ENCODE measurements at regions of chr18 and their contacts with region 1.

Region 1: DNA sequence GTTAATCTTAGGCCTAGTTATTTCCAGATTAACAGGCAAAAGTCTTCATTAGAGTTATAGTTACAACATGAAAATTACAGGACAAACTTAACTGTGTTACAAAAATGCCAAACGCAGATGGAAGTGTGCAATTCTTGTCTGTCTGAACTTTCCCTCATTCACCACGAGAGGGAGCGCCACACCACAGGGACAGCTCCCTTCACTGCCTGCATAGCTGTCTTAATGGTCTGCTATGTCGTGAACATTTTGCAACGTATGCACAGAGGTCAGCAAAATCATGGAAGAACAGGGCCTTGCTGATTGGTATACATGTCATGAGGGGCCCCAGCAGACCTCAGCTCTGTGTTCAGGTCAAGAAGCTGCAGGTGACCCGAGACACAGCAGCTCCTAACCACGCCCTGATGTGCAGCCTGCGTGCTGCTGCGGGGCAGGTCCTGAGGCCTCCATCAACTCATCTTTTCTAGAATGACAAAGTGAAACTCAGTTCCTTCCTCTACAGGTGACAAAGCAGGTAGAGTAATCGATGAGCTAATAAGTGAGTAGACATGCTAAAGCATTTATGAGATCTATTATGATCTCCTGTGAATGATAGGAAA is 78.8 kb upstream of the ATP8B1 start:
- DNase-seq: peak; percentile 94
- H3K4me3 Mint-ChIP-seq: no peak overlapping the region
- H3K27ac Mint-ChIP-seq: no peak overlapping the region
- H3K4me1 Mint-ChIP-seq: peaks cover 5% of the 10 kb centered on the region
- H3K27me3 Mint-ChIP-seq: no peaks in the 10 kb centered on the region
- CTCF ChIP-seq: peak; percentile 87

Region 2: GRCh38 chr18:57630002-57630753 is 251.7 kb before region 1 on chr18:
- CTCF ChIA-PET with region 1: interaction called, 16 read pairs
- POLR2A ChIA-PET with region 1: interaction called, 3 read pairs
- intact Hi-C with region 1: loop called (anchors 1 kb)
- DNase-seq: peak; percentile 97
- H3K4me3 Mint-ChIP-seq: peak overlapping the region; percentile 84
- H3K27ac Mint-ChIP-seq: peak overlapping the region; percentile 97
- H3K4me1 Mint-ChIP-seq: peaks cover 6% of the 10 kb centered on the region
- H3K27me3 Mint-ChIP-seq: no peaks in the 10 kb centered on the region
- CTCF ChIP-seq: peak; percentile 76

Region 3: GRCh38 chr18:57705826-57706554 is 175.9 kb before region 1 on chr18:
- CTCF ChIA-PET with region 1: no interaction called
- POLR2A ChIA-PET with region 1: no interaction called
- intact Hi-C with region 1: no loop called
- DNase-seq: no peak
- H3K4me3 Mint-ChIP-seq: no peak overlapping the region
- H3K27ac Mint-ChIP-seq: no peak overlapping the region
- H3K4me1 Mint-ChIP-seq: no peaks in the 10 kb centered on the region
- H3K27me3 Mint-ChIP-seq: no peaks in the 10 kb centered on the region
- CTCF ChIP-seq: no peak

Region 4: DNA sequence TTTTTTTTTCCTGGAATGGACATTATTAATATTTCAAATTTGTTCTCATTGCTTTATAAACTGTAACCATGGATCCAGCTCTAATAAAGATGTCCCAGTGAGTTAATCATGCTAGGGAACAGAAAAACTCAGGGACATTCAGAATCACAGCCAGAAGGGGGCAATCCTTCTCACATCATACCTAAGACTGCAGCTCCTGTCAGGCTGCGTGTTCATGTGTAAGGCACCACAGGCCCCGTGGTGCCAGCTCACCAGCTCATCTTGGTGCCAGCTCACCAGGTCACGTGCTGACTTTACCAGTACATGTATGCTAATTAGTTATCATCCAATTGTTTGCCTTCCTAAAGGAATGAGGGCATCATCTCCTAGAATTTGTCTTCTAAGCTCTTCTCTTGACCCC is 77.4 kb after region 1 on chr18:
- CTCF ChIA-PET with region 1: interaction called, 10 read pairs
- POLR2A ChIA-PET with region 1: no interaction called
- intact Hi-C with region 1: loop called (anchors 1 kb)
- DNase-seq: peak; percentile 84
- H3K4me3 Mint-ChIP-seq: no peak overlapping the region
- H3K27ac Mint-ChIP-seq: no peak overlapping the region
- H3K4me1 Mint-ChIP-seq: peaks cover 6% of the 10 kb centered on the region
- H3K27me3 Mint-ChIP-seq: no peaks in the 10 kb centered on the region
- CTCF ChIP-seq: peak; percentile 53

Region 5: DNA sequence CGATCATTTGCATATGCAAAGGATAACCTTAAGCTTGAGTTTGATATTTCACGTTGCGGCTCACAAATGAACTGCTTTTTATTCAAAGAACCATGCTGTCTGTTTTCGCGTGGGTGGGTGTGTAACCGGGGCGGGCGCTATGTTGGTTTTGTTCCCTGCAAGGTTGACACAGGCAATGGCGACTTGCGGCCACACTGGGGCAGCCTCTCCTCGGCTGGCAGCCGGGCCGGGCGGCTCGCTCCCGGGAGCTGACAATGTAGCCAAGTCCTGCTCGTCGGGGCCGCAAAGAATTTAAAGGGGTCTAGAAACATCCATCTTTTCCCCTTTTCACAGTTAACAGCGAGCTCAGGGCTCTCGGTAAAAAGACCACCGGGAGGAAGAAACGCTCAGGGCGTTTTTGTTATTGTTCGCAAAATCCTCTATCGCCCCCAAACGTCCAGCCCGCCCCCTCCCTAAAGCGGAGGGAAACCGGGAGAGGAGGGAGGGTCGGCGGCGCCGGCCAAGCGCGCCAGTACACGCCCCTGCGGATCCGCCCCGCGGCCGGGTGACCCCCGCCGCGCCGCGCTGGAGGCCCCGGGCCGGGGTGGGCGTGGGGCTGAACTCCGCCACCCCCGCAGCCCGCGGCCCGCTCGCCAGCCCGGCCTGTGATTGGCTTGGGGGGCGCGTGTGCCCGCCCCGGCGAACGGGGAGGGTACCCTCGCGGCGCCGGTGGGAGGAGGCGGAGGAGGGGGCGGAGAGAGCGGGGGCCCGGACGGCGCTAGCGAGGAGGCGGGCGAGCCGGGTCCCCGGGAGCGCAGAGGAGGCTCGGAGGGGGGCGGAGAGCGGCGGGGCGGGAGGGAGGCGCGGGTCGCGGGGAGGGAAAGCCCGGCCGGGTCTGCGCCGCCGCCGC is 161.8 kb after region 1 on chr18 and contains the start of gene NEDD4L:
- CTCF ChIA-PET with region 1: interaction called, 27 read pairs
- POLR2A ChIA-PET with region 1: interaction called, 7 read pairs
- intact Hi-C with region 1: loop called (anchors 1 kb)
- DNase-seq: peak; percentile 83
- H3K4me3 Mint-ChIP-seq: peak within 1 kb of the TSS; percentile 88
- H3K27ac Mint-ChIP-seq: peak within 1 kb of the TSS; percentile 80
- H3K4me1 Mint-ChIP-seq: peaks cover 19% of the 10 kb centered on the region
- H3K27me3 Mint-ChIP-seq: no peaks in the 10 kb centered on the region
- CTCF ChIP-seq: peak; percentile 83
- total RNA-seq, gene NEDD4L: 75.1 and 108 TPM in 2 replicates

Region 6: GRCh38 chr18:58128381-58129374 is 246.8 kb after region 1 on chr18:
- CTCF ChIA-PET with region 1: interaction called, 10 read pairs
- POLR2A ChIA-PET with region 1: no interaction called
- intact Hi-C with region 1: no loop called
- DNase-seq: no peak
- H3K4me3 Mint-ChIP-seq: no peak overlapping the region
- H3K27ac Mint-ChIP-seq: no peak overlapping the region
- H3K4me1 Mint-ChIP-seq: no peaks in the 10 kb centered on the region
- H3K27me3 Mint-ChIP-seq: no peaks in the 10 kb centered on the region
- CTCF ChIP-seq: no peak

Region 7: GRCh38 chr18:58321986-58322385 is 440.1 kb after region 1 on chr18:
- CTCF ChIA-PET with region 1: no interaction called
- POLR2A ChIA-PET with region 1: no interaction called
- intact Hi-C with region 1: loop called (anchors 2 kb)
- DNase-seq: peak; percentile 91
- H3K4me3 Mint-ChIP-seq: peak overlapping the region; percentile 50
- H3K27ac Mint-ChIP-seq: peak overlapping the region; percentile 85
- H3K4me1 Mint-ChIP-seq: peaks cover 14% of the 10 kb centered on the region
- H3K27me3 Mint-ChIP-seq: no peaks in the 10 kb centered on the region
- CTCF ChIP-seq: peak; percentile 48

Measured in MCF 10A (cell line).